ENCODE measurements at regions of chr1 and their contacts with region 1.

Region 1: GRCh38 chr1:204446370-204447111 is 34.9 kb upstream of the PPP1R15B start:
- H3K4me3 ChIP-seq: no peak overlapping the region
- H3K27ac ChIP-seq: no peak overlapping the region
- H3K4me1 ChIP-seq: peaks cover 3% of the 10 kb centered on the region; the same call in 1 of the 2 replicates
- CTCF ChIP-seq: peak; percentile 53; the same call in 1 of the 2 replicates

Region 2: DNA sequence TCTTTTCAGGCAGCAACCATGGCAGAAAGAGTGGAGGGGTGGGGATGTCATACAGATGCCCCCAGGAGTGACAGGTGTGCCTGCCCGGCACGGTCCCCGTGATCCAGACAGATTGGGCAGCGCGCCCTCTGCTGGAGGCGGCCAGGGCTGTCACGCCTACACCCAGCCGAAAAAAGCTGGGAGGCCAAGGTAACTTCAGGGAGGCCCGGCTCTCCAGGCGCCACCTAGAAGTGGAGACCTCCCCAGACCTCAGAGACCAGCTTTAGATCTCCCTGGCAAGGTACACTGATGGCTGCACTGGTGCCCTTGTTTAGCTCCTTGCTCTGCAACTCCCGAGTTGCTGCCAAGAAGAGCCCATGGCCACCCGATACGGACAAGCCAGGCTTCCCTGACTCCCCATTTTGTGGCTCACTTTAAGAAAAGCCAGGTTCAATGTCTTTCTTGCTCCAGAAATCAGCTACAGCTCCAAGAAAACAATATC is 239.4 kb before region 1 on chr1:
- CTCF ChIA-PET with region 1: no interaction called
- POLR2A ChIA-PET with region 1: no interaction called
- H3K4me3 ChIP-seq: no peak overlapping the region
- H3K27ac ChIP-seq: no peak overlapping the region
- H3K4me1 ChIP-seq: no peaks in the 10 kb centered on the region
- CTCF ChIP-seq: peak; percentile 85

Region 3: GRCh38 chr1:204426029-204426436 is 20.5 kb before region 1 on chr1:
- CTCF ChIA-PET with region 1: interaction called, 99 read pairs
- POLR2A ChIA-PET with region 1: no interaction called
- H3K4me3 ChIP-seq: no peak overlapping the region
- H3K27ac ChIP-seq: no peak overlapping the region
- H3K4me1 ChIP-seq: no peaks in the 10 kb centered on the region
- CTCF ChIP-seq: no peak

Region 4: GRCh38 chr1:204431310-204432165 is 15.0 kb before region 1 on chr1:
- CTCF ChIA-PET with region 1: interaction called, 99 read pairs
- POLR2A ChIA-PET with region 1: no interaction called
- H3K4me3 ChIP-seq: no peak overlapping the region
- H3K27ac ChIP-seq: no peak overlapping the region
- H3K4me1 ChIP-seq: no peaks in the 10 kb centered on the region
- CTCF ChIP-seq: peak; percentile 50; the same call in 1 of the 2 replicates

Region 5: DNA sequence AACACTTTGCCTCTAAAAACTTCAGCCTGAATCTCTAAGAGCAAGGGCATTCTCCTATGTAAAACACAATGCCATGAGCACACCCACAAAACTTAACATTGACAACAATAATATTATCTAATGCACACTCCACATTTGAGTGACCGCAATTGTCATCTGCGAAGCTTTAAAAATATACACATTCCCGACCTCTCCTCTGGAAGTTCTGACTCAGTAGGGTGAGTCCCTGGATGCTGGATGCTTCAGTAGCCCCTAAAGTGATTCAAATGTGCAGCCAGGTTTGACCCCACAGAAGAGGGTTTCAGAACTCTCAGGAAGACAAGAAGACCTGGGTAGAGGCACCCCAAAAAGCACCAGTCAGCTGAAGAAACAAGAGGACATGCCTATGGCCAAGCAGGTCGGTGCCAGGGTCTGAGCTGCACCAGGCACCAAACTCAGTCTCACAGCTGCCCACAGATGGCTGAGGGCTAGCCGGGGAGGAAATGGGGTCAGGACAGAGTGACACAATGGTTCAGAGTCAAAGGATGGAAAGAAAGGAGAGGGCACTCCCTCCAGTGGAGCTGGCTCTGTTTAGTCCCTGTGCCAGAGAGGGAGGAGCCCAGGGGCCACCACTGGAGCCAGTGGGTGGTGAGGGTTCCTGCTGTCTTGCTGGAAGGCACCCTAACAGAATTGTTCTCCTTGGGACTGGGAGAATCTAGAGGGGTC is 30.6 kb after region 1 on chr1:
- CTCF ChIA-PET with region 1: interaction called, 25 read pairs
- POLR2A ChIA-PET with region 1: no interaction called
- H3K4me3 ChIP-seq: no peak overlapping the region
- H3K27ac ChIP-seq: no peak overlapping the region
- H3K4me1 ChIP-seq: no peaks in the 10 kb centered on the region; the same call in 1 of the 2 replicates
- CTCF ChIP-seq: no peak

Region 6: DNA sequence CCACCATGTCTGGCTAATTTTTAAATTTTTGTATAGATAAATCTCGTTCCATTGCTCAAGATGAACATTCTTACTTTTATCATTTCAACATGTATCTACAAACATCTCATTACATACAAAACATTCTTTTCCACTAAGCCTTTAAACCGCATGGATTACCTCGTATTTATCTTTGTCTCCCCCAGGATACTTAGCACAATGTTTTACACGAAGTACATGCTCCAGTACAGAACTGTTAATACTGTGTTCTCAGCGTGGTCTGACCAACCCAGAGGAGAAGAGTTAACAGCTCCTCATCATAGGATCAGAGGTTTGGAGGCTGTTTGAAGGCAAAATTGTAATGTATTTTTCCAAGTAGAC is 40.7 kb after region 1 on chr1:
- CTCF ChIA-PET with region 1: interaction called, 314 read pairs
- POLR2A ChIA-PET with region 1: no interaction called
- H3K4me3 ChIP-seq: no peak overlapping the region
- H3K27ac ChIP-seq: no peak overlapping the region
- H3K4me1 ChIP-seq: no peaks in the 10 kb centered on the region
- CTCF ChIP-seq: no peak

Region 7: GRCh38 chr1:204520834-204521709 is 74.5 kb after region 1 on chr1:
- CTCF ChIA-PET with region 1: no interaction called
- POLR2A ChIA-PET with region 1: no interaction called
- H3K4me3 ChIP-seq: no peak overlapping the region
- H3K27ac ChIP-seq: no peak overlapping the region
- H3K4me1 ChIP-seq: no peaks in the 10 kb centered on the region
- CTCF ChIP-seq: no peak

Region 8: GRCh38 chr1:204558467-204558866 is 111.9 kb after region 1 on chr1:
- CTCF ChIA-PET with region 1: no interaction called
- POLR2A ChIA-PET with region 1: no interaction called
- H3K4me3 ChIP-seq: no peak overlapping the region
- H3K27ac ChIP-seq: no peak overlapping the region
- H3K4me1 ChIP-seq: no peaks in the 10 kb centered on the region
- CTCF ChIP-seq: no peak